AG04449 (cell line): ENCODE measurements at regions of chr10 and their contacts with region 1.

Region 1: DNA sequence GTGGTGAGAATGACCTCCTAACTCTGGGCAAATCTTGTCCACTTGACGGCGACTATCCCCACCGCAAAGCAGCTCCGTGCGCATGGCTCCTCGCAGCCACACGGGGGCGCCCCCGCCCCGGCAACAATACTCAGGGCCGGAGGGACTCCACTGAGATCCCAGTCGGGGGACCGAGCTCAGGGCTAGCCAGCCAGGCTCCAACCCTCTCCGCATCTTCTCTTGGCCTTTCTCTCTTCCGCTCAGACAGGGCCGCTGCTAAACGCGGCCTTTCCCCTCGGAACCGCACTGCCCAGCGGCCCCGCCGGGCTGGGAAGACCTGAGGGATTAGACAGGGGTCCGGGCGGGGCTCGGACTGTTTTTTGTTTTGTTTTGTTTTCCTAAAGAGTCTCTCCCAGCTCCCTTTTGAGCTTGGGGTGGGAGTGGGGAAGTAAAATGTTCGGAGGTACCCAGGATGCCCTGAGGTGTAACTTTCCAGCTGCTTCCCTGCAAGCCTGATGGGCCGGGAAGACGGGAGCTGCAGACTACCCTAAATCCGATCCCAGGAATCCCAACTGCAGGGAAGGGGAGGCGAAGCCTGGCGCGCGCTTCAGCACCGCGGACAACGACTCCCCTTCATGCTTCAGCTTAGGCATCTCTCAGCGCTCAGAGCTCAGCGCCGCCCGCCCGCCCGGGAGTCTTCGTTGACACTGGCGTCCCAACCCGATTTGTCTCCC is 2.7 kb downstream of the KCNIP2 start:
- DNase-seq: no peak
- H3K4me3 ChIP-seq: peak overlapping the region; percentile 45
- CTCF ChIP-seq: peak; percentile 99

Region 2: DNA sequence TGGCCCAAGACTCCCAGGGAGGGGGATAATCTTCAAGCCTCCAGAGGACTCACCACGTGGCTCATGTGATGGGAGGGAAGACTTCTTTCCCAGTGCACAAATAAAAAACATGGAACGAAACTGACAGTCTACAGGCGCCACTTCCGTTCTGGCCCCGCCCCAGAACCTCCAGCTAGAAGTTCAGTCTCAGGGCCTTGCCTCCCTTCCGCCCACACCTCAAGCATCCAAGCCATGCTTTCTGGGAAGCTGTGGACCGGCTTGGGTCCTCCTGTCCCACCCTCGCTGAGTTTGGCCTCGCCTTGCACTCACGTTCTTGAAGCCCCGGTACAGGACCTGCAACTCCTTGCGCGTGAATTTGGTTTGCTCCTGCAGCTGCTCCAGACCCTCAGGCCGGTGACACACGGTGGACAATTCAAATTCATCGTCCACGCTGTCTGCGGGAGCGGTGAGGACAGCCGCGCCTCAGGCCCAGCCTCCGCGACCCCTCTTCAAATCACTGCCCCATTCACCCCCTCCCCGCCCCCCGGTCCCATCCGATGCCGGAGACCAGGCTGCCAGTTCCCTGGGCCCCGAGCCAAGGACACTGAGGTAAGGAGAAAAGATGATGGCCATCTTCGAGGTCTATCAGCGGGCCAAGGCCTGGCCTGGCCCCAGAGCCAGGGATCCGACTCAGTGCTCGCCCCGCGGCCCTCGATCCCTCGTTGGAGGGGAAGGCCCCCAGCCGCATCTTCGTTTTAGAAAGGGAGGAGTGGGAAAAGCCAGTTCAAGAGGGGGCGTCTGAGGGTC is 11.9 kb before region 1 on chr10:
- CTCF ChIA-PET with region 1: interaction called, 30 read pairs
- POLR2A ChIA-PET with region 1: no interaction called
- DNase-seq: no peak
- H3K4me3 ChIP-seq: no peak overlapping the region
- CTCF ChIP-seq: no peak

Region 3: GRCh38 chr10:101879456-101880231 is 38.7 kb after region 1 on chr10:
- CTCF ChIA-PET with region 1: interaction called, 27 read pairs
- POLR2A ChIA-PET with region 1: no interaction called
- DNase-seq: peak; percentile 31
- H3K4me3 ChIP-seq: no peak overlapping the region
- CTCF ChIP-seq: no peak

Region 4: DNA sequence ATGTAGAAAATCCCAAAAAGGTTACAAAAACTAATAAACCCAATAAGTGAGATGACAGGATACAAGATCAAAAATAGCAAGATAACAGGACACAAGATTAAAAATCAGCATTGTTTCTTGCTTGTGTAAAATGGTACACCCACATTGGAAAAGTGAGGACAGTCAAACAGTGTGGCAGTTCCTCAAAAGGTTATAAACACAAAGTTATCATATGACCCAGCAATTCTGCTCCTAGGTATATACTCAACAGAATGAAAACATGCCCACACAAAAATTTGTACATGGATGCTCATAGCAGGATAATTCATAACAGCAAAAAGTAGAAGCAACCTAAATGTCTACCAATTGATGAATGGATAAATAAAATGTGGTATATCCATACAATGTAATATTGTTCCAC is 109.3 kb after region 1 on chr10:
- CTCF ChIA-PET with region 1: interaction called, 16 read pairs
- POLR2A ChIA-PET with region 1: no interaction called
- DNase-seq: no peak
- H3K4me3 ChIP-seq: no peak overlapping the region
- CTCF ChIP-seq: no peak

Region 5: GRCh38 chr10:102009801-102010425 is 169.0 kb after region 1 on chr10:
- CTCF ChIA-PET with region 1: interaction called, 581 read pairs
- POLR2A ChIA-PET with region 1: interaction called, 3 read pairs
- DNase-seq: peak; percentile 73
- H3K4me3 ChIP-seq: no peak overlapping the region
- CTCF ChIP-seq: peak; percentile 82